ENCODE measurements at regions of chr3 and their contacts with region 1.

Region 1: DNA sequence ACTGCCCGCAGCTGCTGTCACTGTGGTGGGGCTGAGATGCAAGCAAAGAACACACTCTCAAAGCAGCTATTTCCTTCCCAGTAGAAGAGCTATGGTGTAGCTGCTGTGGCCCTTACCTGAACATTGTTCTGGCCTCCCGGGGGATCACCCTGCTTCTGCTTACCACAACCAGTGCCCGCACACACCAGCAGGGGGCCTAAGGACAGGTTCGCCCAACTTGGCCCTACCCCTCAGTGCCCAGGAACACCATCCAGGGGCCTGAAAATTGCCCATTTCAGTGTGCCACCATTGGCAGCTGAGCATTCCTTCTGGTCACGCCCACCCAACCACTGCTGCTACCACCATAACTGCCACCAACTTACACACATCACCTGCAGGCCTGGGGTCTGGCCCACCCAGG is 113.0 kb downstream of the TP63 start:
- DNase-seq: no peak
- H3K4me3 ChIP-seq: no peak overlapping the region
- H3K27ac ChIP-seq: no peak overlapping the region
- H3K4me1 ChIP-seq: no peaks in the 10 kb centered on the region
- H3K27me3 ChIP-seq: no peaks in the 10 kb centered on the region
- CTCF ChIP-seq: no peak
- POLR2A ChIP-seq: no peak

Region 2: DNA sequence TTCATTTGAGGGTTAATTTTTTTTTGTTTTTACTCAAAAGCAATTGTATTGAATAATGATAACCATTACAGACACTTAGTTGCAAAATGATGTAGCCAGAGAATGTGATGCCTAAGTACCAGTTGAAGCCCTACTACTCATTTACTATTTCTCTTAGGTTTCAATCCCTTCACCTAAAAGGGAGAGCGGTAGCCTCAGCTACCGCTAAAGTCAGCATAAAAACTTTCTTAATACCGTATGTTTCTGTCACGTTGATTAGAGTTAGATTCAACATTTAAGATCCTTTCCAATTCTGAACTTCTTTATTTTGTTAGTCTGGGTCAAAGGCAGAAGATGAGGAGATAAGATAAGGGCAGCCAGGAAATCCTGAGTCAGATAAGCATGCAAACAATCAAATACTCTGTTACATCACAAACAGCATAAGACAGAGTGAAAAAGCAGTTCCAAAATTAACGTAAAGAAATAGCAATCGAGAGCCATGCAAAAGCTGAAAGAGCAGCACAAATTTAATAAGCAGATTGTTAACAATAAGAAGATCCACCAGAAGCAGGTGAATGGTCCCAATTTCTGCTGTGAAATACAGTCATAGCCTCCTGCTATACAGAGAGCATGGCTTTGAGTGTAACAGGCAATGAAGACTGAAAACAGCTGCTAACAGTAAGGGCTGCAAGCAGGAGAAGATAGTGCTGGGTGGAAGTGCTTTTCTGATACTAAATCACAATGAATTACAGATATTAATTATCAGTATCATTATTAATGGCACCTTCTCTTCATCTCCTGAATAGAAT is 702.5 kb after region 1 on chr3:
- intact Hi-C with region 1: loop called (anchors 5 kb)
- DNase-seq: no peak
- H3K4me3 ChIP-seq: no peak overlapping the region
- H3K27ac ChIP-seq: no peak overlapping the region
- H3K4me1 ChIP-seq: no peaks in the 10 kb centered on the region
- H3K27me3 ChIP-seq: no peaks in the 10 kb centered on the region
- CTCF ChIP-seq: no peak
- POLR2A ChIP-seq: no peak

Measured in breast epithelium (tissue), 4 donors.